Sigmoid colon (tissue), 7 donors: ENCODE measurements at regions of chr2 and their contacts with region 1.

Region 1: GRCh38 chr2:231612179-231613053 is 19.8 kb downstream of the TEX44 start:
- DNase-seq: peak; percentile 98
- H3K4me3 ChIP-seq: no peak overlapping the region
- H3K27ac ChIP-seq: peak overlapping the region; percentile 97 to 98 (median 98)
- H3K4me1 ChIP-seq: peaks cover 0 to 53% (median 51%) of the 10 kb centered on the region in 4 donors
- H3K27me3 ChIP-seq: no peaks in the 10 kb centered on the region
- CTCF ChIP-seq: peak; percentile 97 to 99 (median 98)
- EP300 ChIP-seq: peak in 2 of 4 donors; percentile 16 to 78
- POLR2A ChIP-seq: no peak

Region 2: DNA sequence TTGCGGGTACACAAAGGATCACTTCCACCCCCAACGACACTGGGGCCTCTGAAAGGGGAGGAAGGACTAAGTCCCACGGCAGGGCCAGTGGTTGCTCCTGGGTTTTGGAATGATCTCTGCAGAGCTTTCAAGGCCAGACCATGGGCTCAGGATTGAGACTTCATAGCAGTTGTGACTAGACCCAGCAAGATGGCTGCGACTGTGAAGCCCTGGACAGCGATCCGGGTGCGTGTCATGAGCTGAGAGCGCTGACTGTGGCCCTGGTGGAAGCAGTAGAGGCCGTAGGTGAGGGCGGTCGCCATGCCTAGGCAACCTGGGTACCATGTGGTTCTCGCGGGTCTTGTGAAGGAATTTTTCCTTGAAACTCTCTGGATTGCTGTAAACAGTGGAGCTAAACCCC is 175.5 kb before region 1 on chr2:
- intact Hi-C with region 1: no loop called
- DNase-seq: no peak
- H3K4me3 ChIP-seq: no peak overlapping the region
- H3K27ac ChIP-seq: no peak overlapping the region
- H3K4me1 ChIP-seq: no peaks in the 10 kb centered on the region
- H3K27me3 ChIP-seq: no peaks in the 10 kb centered on the region
- CTCF ChIP-seq: no peak
- EP300 ChIP-seq: no peak
- POLR2A ChIP-seq: no peak

Region 3: GRCh38 chr2:231642631-231643494 is 30.4 kb after region 1 on chr2:
- intact Hi-C with region 1: loop called (anchors 1 kb)
- DNase-seq: peak; percentile 95
- H3K4me3 ChIP-seq: peak overlapping the region in 3 of 4 donors; percentile 18 to 38 (median 26)
- H3K27ac ChIP-seq: peak overlapping the region; percentile 84 to 96 (median 91)
- H3K4me1 ChIP-seq: peaks cover 0 to 31% (median 29%) of the 10 kb centered on the region in 4 donors
- H3K27me3 ChIP-seq: no peaks in the 10 kb centered on the region
- CTCF ChIP-seq: no peak
- EP300 ChIP-seq: peak in 2 of 4 donors; percentile 67 to 81
- POLR2A ChIP-seq: peak; percentile 28 to 47

Region 4: DNA sequence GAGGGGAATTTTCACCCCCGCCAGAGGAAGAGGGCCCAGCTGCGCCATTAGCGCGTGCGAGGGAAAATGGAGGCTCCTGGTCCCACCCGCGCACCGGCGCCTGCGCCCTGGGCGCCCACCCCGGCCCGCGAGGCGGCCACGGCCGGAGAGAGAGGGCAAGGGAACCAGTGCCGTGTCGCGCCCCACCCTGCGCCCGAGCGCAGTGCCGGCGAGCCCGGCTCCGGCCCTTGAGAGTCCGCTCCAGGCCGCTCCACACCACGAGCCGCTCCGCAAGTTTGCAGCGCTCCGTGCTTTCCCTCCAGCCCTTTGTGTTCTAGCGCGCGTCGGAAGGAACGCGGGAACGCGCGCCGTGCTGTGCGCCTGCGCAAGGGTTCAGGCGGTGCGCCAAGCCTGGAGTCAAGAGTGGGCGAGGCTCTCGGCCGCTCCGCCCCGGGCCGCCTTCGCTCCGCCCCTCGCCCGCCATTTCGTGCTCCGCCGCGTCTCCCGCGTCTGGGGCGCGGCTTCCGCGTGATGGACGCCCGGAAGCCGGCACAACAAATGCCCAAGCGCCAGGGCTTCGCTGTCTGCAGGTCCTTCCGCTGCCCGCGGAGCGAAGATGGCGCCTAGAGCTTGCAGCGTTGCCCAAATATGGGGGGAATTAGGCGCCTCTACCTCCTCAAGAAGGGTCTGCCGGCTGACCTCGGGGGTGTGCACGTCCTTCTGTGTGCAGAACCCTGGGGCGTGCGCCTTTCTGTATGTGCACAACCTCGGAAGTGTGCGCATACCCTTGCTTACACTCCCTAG is 49.8 kb after region 1 on chr2:
- intact Hi-C with region 1: loop called (anchors 2 kb)
- DNase-seq: peak; percentile 98
- H3K4me3 ChIP-seq: peak overlapping the region; percentile 24 to 49 (median 43)
- H3K27ac ChIP-seq: peak overlapping the region; percentile 95 to 99 (median 97)
- H3K4me1 ChIP-seq: peaks cover 4 to 40% (median 30%) of the 10 kb centered on the region in 4 donors
- H3K27me3 ChIP-seq: no peaks in the 10 kb centered on the region
- CTCF ChIP-seq: peak in 1 of 4 experiments; percentile 8
- EP300 ChIP-seq: peak in 1 of 4 donors; percentile 81
- POLR2A ChIP-seq: peak in 1 of 2 donors; percentile 66

Region 5: GRCh38 chr2:231674587-231675338 is 62.3 kb after region 1 on chr2:
- intact Hi-C with region 1: loop called (anchors 1 kb)
- DNase-seq: peak; percentile 90
- H3K4me3 ChIP-seq: no peak overlapping the region
- H3K27ac ChIP-seq: peak overlapping the region; percentile 90 to 94 (median 90)
- H3K4me1 ChIP-seq: peaks cover 0 to 54% (median 49%) of the 10 kb centered on the region in 4 donors
- H3K27me3 ChIP-seq: no peaks in the 10 kb centered on the region
- CTCF ChIP-seq: peak; percentile 88 to 95 (median 94)
- EP300 ChIP-seq: peak in 1 of 4 donors; percentile 62
- POLR2A ChIP-seq: no peak

Region 6: GRCh38 chr2:231715258-231715997 is 103.0 kb after region 1 on chr2:
- intact Hi-C with region 1: loop called (anchors 1 kb)
- DNase-seq: peak; percentile 87
- H3K4me3 ChIP-seq: no peak overlapping the region
- H3K27ac ChIP-seq: peak overlapping the region in 3 of 4 donors; percentile 96 to 100 (median 99)
- H3K4me1 ChIP-seq: peaks cover 0 to 41% (median 38%) of the 10 kb centered on the region in 4 donors
- H3K27me3 ChIP-seq: no peaks in the 10 kb centered on the region
- CTCF ChIP-seq: peak; percentile 92 to 96 (median 94)
- EP300 ChIP-seq: no peak
- POLR2A ChIP-seq: no peak

Region 7: DNA sequence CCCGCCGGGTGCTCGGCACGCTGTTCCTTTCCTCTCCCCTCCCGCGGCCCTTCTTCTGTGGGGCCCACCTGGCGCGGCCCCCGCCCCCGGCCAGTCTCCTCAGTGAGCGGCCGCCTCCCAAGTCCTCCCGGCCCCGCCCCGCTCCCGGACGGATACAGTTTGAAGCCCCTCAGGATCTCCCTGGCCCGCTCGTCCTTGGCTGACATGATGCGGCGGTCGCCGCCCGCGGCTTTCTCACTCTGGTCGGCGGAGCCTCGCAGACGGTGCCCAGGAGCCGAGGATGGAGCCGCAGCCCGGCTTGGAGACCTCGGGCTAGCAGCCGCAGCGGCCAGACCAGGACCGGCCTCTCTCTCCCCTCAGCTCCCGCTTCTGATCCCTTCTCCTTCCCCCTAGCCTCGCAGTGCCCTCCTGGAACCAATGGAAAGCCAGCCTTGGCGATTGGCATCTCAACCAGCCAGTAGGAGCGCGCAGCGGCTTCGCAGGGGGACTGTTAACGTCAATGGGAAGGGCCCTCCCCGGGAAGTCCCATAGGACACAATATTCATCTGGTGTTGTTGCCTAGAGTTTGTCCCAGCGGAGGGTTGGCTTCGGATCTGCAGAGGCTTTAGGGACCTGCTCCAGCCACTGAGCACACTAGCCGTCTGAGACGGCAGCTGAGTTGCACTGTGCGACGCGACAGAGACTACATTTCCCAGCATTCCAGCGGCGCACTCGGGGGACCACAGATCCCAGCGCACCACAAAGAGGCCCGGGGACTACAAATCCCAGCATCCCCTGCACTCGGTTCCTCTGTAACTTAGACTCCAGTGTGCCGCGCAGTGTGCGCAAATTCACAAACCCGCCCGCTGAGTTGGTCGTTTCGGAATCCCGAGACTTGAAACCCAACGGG is 168.7 kb after region 1 on chr2 and contains the start of gene PDE6D:
- intact Hi-C with region 1: loop called (anchors 5 kb)
- DNase-seq: peak; percentile 99
- H3K4me3 ChIP-seq: peak within 1 kb of the TSS; percentile 66 to 84 (median 75)
- H3K27ac ChIP-seq: peak within 1 kb of the TSS; percentile 85 to 89 (median 87)
- H3K4me1 ChIP-seq: peaks cover 0 to 42% (median 38%) of the 10 kb centered on the region in 4 donors
- H3K27me3 ChIP-seq: no peaks in the 10 kb centered on the region
- CTCF ChIP-seq: no peak
- EP300 ChIP-seq: no peak
- POLR2A ChIP-seq: peak; percentile 82 to 95
- total RNA-seq, gene PDE6D: 19.9 to 44.9 (median 26.3) TPM